Posterior vena cava (tissue), 2 donors: ENCODE measurements at regions of chr5 and their contacts with region 1.

Region 1: DNA sequence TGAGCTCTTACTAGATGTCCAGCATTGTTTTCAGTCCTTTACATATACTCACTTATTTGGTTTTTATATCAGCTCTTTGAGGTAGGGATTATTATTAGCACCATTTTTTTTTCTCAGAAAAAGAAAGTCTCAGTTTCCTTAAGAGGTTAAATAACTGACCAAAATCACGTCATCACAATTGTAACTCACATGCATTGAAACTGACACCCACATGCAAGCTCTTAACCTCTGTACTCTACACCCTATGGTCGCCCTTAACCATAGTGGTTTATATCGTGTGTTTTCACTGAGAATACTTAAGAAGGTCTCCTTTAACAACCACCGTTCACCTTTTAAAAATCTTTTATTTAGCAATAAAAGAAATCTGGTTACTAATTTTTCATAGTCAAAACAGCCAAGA is 61.0 kb downstream of the PRDM6 start:
- DNase-seq: no peak

Region 2: DNA sequence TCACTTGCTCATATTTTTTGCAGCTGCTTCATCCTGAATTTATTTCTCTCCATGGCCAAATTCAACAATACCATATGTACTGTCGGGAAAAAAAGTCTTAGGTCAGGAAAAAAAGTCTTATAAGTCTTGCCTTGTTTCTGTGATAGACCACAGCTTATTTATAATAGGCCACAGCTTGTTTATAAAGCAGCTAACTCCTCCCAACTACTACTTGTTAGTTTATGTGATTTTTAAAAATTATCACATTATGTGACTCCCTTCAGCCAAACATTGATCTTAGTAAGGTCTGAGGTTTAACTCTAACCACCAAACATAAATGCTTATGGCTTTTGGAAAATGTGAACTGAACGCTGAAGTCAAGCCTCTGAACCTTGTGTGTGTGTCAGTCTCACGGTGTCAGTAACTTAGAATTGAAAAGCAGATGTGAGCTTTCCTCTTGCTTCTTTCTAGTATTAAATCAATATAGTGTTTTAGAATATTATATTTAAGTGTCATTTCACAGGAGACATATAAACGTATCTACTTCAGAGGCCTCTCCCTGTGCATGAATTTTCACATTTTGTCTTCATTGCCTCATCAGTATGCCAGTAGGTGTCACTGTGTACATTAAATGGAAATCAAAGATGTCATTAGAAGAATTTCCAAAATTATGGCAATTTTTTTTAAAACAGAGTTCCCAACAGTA is 253.3 kb before region 1 on chr5:
- intact Hi-C with region 1: loop called in 1 of 2 experiments (anchors 5 kb)
- DNase-seq: no peak

Region 3: GRCh38 chr5:123180178-123180577 is 30.1 kb after region 1 on chr5:
- intact Hi-C with region 1: no loop called
- DNase-seq: peak; percentile 85

Region 4: DNA sequence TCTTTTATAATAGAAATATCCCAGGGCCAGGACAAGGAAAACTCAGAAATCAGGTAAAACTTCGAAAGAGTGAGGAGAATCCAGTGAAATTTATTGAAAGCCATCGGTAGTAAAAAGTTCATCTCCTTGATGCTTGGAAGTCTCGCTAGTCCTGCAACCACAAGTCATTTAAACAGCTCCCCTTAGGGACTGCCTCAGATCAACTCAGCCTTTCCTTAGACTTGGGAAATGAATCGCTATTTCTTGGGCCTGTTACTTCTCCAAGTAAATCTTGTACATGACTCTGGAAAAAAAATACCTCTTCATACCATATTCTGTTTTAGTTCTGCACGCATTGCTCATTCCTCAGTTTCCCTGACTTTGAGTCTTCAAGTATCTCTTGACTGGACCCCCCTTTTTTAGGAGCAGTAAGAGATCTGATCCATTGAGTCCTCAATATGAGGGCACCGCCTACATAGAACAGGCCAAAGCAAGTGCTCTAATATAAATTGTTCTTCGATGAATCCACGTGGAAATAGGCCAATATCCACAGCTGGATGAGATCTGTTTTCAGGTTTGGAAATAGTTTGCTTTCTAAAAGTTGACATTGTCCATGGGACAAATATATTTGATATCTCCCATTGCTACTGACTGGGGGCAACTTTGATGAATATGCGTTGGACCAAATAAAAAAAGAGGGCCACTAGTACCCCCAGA is 53.2 kb after region 1 on chr5:
- intact Hi-C with region 1: no loop called
- DNase-seq: no peak